Pancreas (tissue), 10 donors: ENCODE measurements at regions of chr15 and their contacts with region 1.

Region 1: DNA sequence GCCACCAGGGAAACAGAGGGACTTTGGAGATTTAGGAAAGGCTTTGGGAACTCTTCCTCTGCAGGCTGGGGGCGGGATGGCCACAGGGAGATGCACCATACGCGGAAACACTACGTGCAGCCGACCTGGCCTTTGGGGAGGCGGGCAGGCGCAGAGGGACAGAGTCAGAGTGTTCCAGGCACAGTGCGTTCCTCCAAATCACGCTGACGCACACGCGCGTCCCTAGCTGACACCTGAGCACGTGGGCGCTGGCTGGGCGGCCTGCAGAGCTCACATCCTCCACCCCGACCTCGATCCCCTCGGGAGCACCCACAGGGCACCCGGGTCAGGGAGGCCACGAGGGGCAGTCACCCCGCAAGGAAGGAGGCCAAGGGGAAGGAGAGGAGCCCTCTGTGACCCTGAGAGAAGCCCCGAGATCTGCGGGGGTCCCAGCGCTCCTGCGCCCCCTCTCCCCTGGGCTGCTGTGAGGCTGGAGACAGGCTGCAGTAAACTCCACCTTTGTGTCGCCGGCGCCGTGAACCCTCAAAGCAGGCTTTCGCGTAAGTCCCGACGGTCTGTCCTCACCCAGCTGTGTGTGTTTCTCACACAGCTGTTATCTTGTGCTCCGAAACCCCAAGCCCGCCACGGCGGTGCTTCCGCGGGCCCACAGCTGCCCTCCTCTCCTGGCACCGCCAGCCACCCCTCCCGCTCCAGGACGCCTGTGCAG is 196.3 kb downstream of the OCA2 start:
- DNase-seq: peak in 1 of 6 donors; percentile 54
- ATAC-seq: no peak
- H3K4me3 ChIP-seq: no peak overlapping the region
- H3K27ac ChIP-seq: no peak overlapping the region
- H3K4me1 ChIP-seq: no peaks in the 10 kb centered on the region
- H3K27me3 ChIP-seq: no peaks in the 10 kb centered on the region
- CTCF ChIP-seq: no peak

Region 2: GRCh38 chr15:27965546-27965945 is 62.7 kb after region 1 on chr15:
- intact Hi-C with region 1: loop called in 1 of 3 experiments (anchors 10 kb)
- DNase-seq: no peak
- ATAC-seq: no peak
- H3K4me3 ChIP-seq: no peak overlapping the region
- H3K27ac ChIP-seq: no peak overlapping the region
- H3K4me1 ChIP-seq: no peaks in the 10 kb centered on the region
- H3K27me3 ChIP-seq: no peaks in the 10 kb centered on the region
- CTCF ChIP-seq: no peak